HCT116 (cell line): ENCODE measurements at regions of chr6 and their contacts with region 1.

Region 1: DNA sequence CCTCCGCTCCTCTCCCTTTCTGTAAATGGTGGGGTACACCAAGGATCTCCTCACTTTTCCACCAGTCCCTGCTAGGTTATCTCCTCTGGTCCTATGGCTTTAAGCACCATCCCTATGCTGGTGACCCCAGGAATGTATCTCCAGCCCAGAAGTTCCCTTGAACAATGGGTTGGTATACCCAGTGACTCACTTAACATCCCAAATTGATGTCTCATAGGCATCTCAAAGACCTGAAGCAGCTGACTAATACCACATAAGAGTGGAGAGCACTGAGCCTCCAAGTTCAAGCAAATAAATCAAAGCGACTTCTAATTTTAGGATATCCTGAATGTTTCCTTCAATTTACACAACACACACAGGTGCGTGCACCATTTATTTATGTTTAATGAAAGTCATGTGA is 48.3 kb downstream of the ADGRF1 start:
- DNase-seq: peak; percentile 90
- ATAC-seq: peak; percentile 93
- H3K4me3 ChIP-seq: peak overlapping the region in 1 of 2 experiments; percentile 8; a peak in 1 of 4 replicates
- H3K27ac ChIP-seq: peak overlapping the region; percentile 42; the same call in 1 of the 2 replicates
- H3K4me1 ChIP-seq: peaks cover 15 to 70% of the 10 kb centered on the region in 2 experiments
- H3K27me3 ChIP-seq: no peaks in the 10 kb centered on the region
- CTCF ChIP-seq: no peak
- POLR2A ChIP-seq: no peak
- RAD21 ChIP-seq: 0 out of 2 replicates have a peak, but pooled peaks have one; percentile 28

Region 2: DNA sequence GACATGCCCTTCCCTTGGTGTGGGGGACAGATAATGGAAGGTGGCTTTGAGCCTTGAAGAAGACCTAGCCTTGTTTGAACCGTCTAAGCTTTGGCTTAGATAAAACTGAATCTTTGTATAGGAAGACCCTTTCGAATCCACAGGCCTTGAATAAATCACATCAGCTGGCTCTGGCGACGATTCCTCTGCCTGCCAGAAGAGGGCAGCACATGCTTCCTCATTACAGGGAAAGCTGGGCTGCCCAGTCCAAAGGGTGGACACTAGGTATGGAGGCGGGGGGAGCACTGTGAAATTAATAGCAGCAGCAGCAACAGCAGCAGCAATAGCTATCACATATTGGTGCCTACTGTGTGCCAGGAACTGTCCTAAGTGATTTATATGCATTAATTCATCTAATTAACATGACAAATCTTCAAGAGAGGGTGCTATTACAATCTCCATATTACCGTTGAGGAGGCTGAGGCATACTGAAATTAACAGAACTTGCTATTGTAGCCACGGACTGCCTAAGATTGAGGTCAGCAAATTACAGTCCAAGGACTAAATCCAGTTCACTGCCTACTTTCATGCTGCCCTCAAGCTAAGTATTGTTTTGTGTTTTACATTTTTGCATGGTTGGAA is 1063.3 kb before region 1 on chr6:
- CTCF ChIA-PET with region 1: interaction called, 3 read pairs
- POLR2A ChIA-PET with region 1: no interaction called
- RAD21 ChIA-PET with region 1: no interaction called
- intact Hi-C with region 1: loop called (anchors 1 kb)
- DNase-seq: peak; percentile 54
- ATAC-seq: peak; percentile 92
- H3K4me3 ChIP-seq: no peak overlapping the region
- H3K27ac ChIP-seq: no peak overlapping the region
- H3K4me1 ChIP-seq: peaks cover 0 to 4% of the 10 kb centered on the region in 2 experiments; a peak in 1 of 4 replicates
- H3K27me3 ChIP-seq: no peaks in the 10 kb centered on the region
- CTCF ChIP-seq: peak; percentile 67 to 99 (median 94); a peak in 5 of 6 replicates
- POLR2A ChIP-seq: no peak
- RAD21 ChIP-seq: peak; percentile 88

Region 3: GRCh38 chr6:46221222-46221793 is 772.5 kb before region 1 on chr6:
- CTCF ChIA-PET with region 1: no interaction called
- POLR2A ChIA-PET with region 1: no interaction called
- RAD21 ChIA-PET with region 1: no interaction called
- intact Hi-C with region 1: loop called (anchors 1 kb)
- DNase-seq: peak; percentile 18
- ATAC-seq: peak; percentile 83
- H3K4me3 ChIP-seq: no peak overlapping the region
- H3K27ac ChIP-seq: no peak overlapping the region
- H3K4me1 ChIP-seq: no peaks in the 10 kb centered on the region
- H3K27me3 ChIP-seq: 0 out of 2 replicates have a peak, but pooled peaks cover 4% of the 10 kb centered on the region
- CTCF ChIP-seq: peak; percentile 66 to 87 (median 74)
- POLR2A ChIP-seq: no peak
- RAD21 ChIP-seq: peak; percentile 85

Region 4: DNA sequence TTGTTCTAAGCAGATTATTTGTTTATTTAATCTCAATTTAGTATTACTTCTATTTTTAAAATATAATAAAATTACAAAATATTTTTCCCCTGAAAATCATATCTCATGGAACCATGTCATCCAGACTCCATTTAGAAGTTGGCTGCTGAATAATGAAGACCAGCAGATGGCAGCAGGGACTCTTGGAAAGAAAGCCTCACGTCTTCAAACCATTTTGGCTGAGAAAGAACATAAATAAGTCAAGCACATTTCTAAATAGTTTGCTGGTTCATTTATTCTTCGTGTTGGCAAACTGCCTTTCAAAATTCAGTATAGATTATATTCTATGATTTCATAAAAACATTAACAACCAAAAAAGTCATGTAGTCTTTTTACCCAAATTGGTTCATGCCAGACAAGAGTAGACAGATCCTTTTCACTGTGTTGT is 574.3 kb before region 1 on chr6:
- CTCF ChIA-PET with region 1: no interaction called
- POLR2A ChIA-PET with region 1: no interaction called
- RAD21 ChIA-PET with region 1: no interaction called
- intact Hi-C with region 1: loop called (anchors 1 kb)
- DNase-seq: peak; percentile 60
- ATAC-seq: peak; percentile 63; the same call in 1 of the 2 replicates
- H3K4me3 ChIP-seq: no peak overlapping the region
- H3K27ac ChIP-seq: no peak overlapping the region
- H3K4me1 ChIP-seq: no peaks in the 10 kb centered on the region
- H3K27me3 ChIP-seq: no peaks in the 10 kb centered on the region
- CTCF ChIP-seq: peak; percentile 67 to 88 (median 73)
- POLR2A ChIP-seq: no peak
- RAD21 ChIP-seq: peak; percentile 91

Region 5: DNA sequence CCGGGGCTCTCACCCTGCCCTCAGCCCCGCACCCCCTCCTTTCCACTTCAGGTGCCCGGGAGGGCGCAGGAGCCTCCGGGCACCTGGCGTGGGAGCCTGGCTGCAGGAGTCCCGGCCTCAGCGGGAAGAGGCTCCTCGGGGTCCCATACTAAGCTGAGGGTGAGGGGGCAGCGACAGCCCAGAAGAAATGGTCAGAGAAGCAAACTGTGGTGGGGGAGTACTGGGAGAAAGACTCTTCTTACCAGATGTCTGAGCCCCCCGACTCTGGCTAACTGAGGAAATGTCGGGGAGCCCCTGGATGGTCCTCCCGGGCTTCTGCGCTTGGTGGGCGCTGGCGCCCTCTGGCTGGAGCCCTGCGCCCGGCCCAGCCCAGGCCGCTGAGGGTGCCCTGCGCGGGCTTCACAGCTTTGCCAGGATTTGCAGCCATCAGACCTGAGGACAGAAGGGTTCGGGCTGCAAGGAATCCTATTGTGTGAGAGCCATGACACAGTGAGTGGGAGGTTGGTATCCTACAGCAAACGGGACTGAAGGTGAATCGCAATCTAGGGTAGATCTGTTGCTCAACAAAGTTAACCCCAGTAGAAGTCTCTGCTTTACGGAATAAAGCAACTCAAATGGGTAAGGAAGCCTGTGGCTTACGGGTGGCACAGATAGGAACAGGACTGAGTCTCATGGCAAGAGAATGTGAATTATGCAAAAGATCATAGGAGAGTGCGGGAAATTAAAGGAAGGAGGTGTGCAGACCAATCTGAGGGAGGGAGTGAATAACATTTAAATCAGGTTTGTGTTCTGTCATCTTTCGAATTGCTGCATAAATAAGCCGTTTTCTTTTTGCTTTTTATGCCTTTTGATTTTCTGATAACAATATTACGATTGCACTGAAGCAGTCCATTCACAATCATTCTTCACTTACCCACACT is 502.0 kb before region 1 on chr6:
- CTCF ChIA-PET with region 1: no interaction called
- POLR2A ChIA-PET with region 1: no interaction called
- RAD21 ChIA-PET with region 1: no interaction called
- intact Hi-C with region 1: loop called (anchors 10 kb)
- DNase-seq: peak; percentile 24
- ATAC-seq: peak; percentile 80
- H3K4me3 ChIP-seq: peak overlapping the region; percentile 58 to 69
- H3K27ac ChIP-seq: no peak overlapping the region; the same call in 1 of the 2 replicates
- H3K4me1 ChIP-seq: peaks cover 2 to 12% of the 10 kb centered on the region in 2 experiments; a peak in 3 of 4 replicates
- H3K27me3 ChIP-seq: peaks cover 29% of the 10 kb centered on the region; the same call in 1 of the 2 replicates
- CTCF ChIP-seq: peak; percentile 42 to 64 (median 58); a peak in 5 of 6 replicates
- POLR2A ChIP-seq: no peak
- RAD21 ChIP-seq: peak; percentile 51

Region 6: GRCh38 chr6:46704562-46704961 is 289.3 kb before region 1 on chr6:
- CTCF ChIA-PET with region 1: interaction called, 3 read pairs
- POLR2A ChIA-PET with region 1: no interaction called
- RAD21 ChIA-PET with region 1: no interaction called
- intact Hi-C with region 1: loop called (anchors 2 kb)
- DNase-seq: peak; percentile 44
- ATAC-seq: peak; percentile 77
- H3K4me3 ChIP-seq: no peak overlapping the region
- H3K27ac ChIP-seq: no peak overlapping the region
- H3K4me1 ChIP-seq: 0 out of 4 replicates have a peak, but pooled peaks cover 0 to 4% of the 10 kb centered on the region in 2 experiments
- H3K27me3 ChIP-seq: no peaks in the 10 kb centered on the region
- CTCF ChIP-seq: peak in 2 of 3 experiments; percentile 38 to 61; a peak in 3 of 6 replicates
- POLR2A ChIP-seq: no peak
- RAD21 ChIP-seq: peak; percentile 75

Region 7: DNA sequence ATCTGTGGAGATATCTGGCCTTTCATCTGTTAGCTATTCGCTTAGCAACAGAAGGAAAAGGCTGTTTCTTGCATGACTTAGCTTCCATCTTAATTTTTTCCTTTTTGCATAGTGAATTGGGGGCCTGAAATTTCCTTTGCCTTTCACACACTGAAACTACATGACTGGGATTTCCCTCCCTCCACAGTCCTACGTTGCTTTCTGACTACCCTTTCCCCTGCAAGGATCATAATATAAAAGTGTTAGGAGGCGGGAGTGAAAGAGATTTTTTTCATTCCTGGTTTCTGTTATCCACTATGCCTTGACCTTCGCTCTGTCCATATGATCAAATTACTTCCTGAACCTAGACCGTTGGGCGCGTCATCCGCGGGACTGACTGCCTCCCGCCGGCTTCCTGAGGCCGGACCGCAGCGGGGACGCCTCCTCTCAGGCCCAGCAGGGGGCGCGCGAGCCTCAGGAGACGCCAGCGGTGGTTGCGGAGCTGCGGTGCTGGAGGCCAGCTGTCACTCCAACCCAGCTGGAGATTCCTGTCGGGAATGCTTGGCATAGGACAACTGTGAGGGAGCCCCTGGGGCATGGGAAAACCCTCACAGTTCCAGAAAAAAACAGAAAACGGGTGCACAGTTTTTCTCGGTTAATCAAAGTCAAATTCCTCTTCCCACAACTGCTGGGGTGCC is 145.0 kb before region 1 on chr6:
- CTCF ChIA-PET with region 1: interaction called, 18 read pairs
- POLR2A ChIA-PET with region 1: no interaction called
- RAD21 ChIA-PET with region 1: no interaction called
- intact Hi-C with region 1: loop called (anchors 1 kb)
- DNase-seq: peak; percentile 53
- ATAC-seq: peak; percentile 99
- H3K4me3 ChIP-seq: peak overlapping the region in 1 of 2 experiments; percentile 13; a peak in 1 of 4 replicates
- H3K27ac ChIP-seq: no peak overlapping the region
- H3K4me1 ChIP-seq: peaks cover 0 to 18% of the 10 kb centered on the region in 2 experiments; a peak in 2 of 4 replicates
- H3K27me3 ChIP-seq: no peaks in the 10 kb centered on the region
- CTCF ChIP-seq: peak; percentile 88 to 94 (median 92)
- POLR2A ChIP-seq: no peak
- RAD21 ChIP-seq: peak; percentile 98